GM13977 (cell line): ENCODE measurements at regions of chr2 and their contacts with region 1.

Region 1: GRCh38 chr2:19349911-19350677 is 8.3 kb downstream of the OSR1 start:
- DNase-seq: peak; percentile 81
- CTCF ChIP-seq: peak; percentile 93

Region 2: DNA sequence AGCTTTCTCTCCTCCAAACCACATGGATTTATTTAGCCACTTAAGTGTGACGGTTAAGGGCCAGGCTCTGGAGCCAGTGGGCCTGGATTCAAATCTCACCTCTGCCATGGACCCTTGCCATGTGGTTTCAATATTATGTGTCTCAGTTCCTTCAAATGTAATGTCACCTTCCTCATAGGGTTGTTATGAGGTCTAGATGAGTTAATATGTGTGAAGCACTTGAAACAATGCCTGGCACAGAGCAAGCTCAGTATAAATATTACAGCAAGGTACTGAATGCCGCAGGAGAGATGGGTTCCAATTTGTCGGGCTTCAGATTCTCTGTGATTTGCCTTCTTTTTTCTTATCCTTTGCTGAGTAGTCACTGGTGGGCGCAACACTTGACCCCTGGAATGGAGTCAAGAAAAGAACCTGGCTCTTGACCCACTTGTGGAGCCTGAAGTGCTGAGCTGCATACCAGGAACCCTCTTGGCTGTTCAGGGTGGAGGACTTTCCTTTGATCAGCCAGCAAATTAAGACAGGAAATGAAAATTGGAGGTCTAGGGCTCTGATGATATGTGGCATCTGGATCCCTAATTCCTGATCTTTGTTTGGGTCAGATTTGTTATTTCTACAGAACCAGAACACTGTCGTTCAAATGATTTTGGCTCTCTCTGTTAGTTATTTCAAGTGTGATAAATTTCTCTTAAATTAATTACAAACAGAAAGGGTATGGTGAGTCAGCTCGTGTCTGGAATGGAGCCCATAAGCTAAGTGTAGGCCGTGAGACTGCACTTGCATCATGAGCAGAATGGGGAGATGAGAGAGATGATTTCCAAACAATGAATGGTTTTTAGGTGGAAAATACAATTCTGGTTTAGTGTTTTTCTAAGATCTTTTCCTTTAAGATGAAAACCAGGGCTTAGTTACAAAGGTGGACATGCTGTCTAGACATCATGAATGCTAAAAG is 1178.6 kb before region 1 on chr2:
- in situ Hi-C with region 1: no loop called
- DNase-seq: no peak
- CTCF ChIP-seq: no peak

Region 3: DNA sequence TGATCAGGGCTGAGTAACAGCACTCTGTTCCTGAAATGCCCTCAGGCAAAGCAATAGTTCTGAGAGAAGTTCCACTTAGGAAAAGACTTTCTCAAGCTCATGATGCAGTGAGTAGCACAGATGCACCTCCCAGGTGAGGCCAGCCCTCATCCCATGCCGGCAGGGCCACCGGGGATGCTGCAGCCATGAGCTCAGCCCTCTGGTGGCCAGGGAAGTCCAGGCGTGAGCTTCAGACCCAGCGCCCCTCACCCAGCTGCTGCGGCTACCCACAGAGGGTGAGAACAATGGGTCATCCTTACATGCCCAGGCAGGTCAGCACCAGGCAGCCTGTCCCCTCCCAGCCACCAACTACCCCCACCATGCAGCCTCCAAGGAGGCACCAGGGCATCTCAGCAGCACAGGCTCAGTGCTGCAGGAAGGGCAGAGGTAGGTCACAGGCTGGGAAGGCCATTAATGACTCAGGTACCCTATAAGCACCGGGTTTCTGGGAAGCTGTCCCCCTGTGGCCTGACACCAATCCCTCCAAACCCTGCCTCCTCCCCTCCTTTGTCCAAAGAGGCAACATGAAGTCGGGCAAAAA is 501.1 kb after region 1 on chr2:
- in situ Hi-C with region 1: loop called (anchors 10 kb)
- DNase-seq: no peak
- CTCF ChIP-seq: no peak